Head of caudate nucleus (tissue), 42 donors: ENCODE measurements at regions of chr3 and their contacts with region 1.

Region 1: DNA sequence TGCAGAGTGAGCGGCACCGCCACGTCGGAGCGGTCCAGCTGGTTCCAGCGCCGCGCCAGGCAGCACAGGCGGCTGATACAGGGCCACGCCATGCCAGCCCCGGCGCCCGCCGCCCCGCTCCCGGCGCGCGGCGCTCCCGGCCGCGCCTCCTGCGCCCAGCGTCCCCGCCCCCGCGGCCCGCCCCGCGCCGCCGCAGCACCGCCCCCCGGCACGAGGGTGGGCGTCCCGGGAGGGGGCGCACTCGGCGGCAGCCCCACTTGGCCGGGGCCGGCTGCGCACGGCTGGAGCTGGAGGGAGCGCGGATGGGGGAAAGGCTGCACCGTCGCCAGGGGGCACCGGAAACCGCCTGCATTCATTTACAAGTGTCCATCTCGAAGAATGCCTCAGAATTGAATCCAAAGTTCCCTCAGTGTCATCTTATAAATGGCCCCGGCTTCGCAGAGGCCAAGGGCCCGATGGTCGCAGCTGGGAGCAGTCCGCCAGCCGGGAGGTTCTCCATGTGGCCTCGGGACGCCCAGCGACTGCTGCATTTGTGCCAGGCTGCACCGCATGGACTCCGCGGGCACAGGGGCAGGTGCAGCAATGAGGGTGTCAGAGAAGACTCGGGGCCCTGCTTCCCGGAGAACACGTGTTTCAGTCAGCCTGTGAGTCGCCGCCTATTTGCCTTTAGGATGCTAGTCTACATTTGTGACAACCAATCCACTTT is at the start of gene MAP6D1:
- DNase-seq: peak; percentile 58 to 93 (median 82)

Region 2: GRCh38 chr3:183317886-183318865 is 507.4 kb before region 1 on chr3:
- intact Hi-C with region 1: no loop called
- DNase-seq: no peak

Region 3: DNA sequence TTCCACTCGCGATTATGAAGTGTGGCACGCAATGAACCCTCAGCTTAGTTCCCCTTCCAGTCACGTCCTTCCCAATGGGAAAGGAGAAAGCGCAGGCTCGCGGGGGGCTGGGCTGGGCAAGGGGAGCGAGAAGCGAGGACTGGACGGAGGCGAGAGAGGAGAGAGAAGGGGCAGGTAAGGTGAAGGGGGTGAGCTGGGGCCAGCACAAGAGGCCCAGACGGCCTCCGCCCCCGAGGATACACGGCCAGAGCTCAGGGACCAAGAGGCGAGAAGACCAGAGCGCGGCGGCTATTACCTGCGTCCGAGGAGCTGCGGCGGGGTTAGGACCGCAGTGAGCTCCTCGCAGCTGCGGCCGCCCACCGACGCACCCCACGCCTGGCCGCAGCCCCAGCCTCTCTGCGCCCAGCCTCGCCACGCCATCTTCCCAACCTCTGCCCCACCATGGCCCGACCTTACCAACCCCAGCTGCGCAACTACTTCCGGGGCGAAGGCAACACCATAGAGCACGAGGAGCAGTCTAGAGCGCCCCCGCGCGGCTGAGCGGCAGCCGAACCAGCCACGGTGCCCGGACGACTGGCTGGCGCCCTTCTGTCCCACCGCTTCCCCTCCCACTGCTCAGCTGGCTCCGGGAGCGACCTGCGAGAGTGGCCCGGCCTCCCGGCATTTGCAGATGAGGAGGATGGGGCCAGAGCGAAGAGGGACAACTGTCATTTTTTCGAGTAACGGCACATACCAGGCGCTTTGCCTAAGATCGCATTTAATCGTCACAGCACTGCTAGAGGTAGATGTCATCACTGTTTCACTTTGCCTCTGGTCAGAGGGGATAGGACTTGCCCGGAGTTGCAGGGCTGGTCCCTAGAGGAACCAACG is 59.1 kb after region 1 on chr3 and contains the start of gene PARL:
- intact Hi-C with region 1: loop called (anchors 2 kb)
- DNase-seq: peak; percentile 93 to 99 (median 98)

Region 4: GRCh38 chr3:184085389-184085852 is 259.8 kb after region 1 on chr3:
- intact Hi-C with region 1: no loop called
- DNase-seq: no peak